ENCODE measurements at regions of chr12 and their contacts with region 1.

Region 1: GRCh38 chr12:112353389-112353788 is 28.8 kb downstream of the HECTD4 start:
- DNase-seq: no peak
- H3K4me3 ChIP-seq: no peak overlapping the region
- H3K27ac ChIP-seq: no peak overlapping the region
- H3K4me1 ChIP-seq: peaks cover 6% of the 10 kb centered on the region
- H3K27me3 ChIP-seq: no peaks in the 10 kb centered on the region
- CTCF ChIP-seq: no peak
- EP300 ChIP-seq: no peak
- POLR2A ChIP-seq: no peak

Region 2: DNA sequence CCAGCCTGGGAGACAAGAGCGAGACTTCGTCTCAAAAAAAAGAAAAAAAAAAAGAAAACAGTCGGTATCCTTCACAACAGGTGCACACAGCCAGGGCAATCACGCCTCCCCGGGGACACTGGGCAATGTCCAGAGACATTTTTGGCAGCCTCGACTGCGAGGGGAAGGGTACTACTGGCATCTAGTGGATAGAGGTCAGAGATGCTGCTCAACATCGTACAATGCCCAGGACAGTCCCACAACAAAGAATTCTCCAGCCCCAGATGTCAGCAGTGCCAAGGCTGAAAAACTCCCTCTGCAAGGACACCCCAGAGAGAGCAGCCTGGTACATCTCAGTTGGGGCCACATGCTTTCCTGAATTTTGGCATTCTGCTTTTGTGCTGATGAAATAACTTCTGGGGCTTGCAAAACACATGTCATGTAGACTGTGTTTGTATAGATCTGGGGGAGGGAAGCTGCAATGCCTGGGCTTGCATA is 565.2 kb before region 1 on chr12:
- intact Hi-C with region 1: loop called in 1 of 4 experiments (anchors 5 kb)
- DNase-seq: peak in 4 of 5 donors; percentile 37 to 56 (median 52)
- H3K4me3 ChIP-seq: no peak overlapping the region
- H3K27ac ChIP-seq: peak overlapping the region in 1 of 2 donors; percentile 20
- H3K4me1 ChIP-seq: peaks cover 12% of the 10 kb centered on the region
- H3K27me3 ChIP-seq: no peaks in the 10 kb centered on the region
- CTCF ChIP-seq: no peak
- EP300 ChIP-seq: no peak
- POLR2A ChIP-seq: no peak

Region 3: GRCh38 chr12:111984820-111985219 is 368.6 kb before region 1 on chr12:
- intact Hi-C with region 1: loop called in 1 of 4 experiments (anchors 5 kb)
- DNase-seq: no peak
- H3K4me3 ChIP-seq: no peak overlapping the region
- H3K27ac ChIP-seq: no peak overlapping the region
- H3K4me1 ChIP-seq: no peaks in the 10 kb centered on the region
- H3K27me3 ChIP-seq: no peaks in the 10 kb centered on the region
- CTCF ChIP-seq: no peak
- EP300 ChIP-seq: no peak
- POLR2A ChIP-seq: no peak

Region 4: GRCh38 chr12:112463478-112463877 is 110.1 kb after region 1 on chr12:
- intact Hi-C with region 1: no loop called
- DNase-seq: no peak
- H3K4me3 ChIP-seq: no peak overlapping the region
- H3K27ac ChIP-seq: no peak overlapping the region
- H3K4me1 ChIP-seq: no peaks in the 10 kb centered on the region
- H3K27me3 ChIP-seq: no peaks in the 10 kb centered on the region
- CTCF ChIP-seq: no peak
- EP300 ChIP-seq: no peak
- POLR2A ChIP-seq: no peak

Measured in ovary (tissue), 10 donors.